ENCODE measurements at regions of chr2 and their contacts with region 1.

Region 1: DNA sequence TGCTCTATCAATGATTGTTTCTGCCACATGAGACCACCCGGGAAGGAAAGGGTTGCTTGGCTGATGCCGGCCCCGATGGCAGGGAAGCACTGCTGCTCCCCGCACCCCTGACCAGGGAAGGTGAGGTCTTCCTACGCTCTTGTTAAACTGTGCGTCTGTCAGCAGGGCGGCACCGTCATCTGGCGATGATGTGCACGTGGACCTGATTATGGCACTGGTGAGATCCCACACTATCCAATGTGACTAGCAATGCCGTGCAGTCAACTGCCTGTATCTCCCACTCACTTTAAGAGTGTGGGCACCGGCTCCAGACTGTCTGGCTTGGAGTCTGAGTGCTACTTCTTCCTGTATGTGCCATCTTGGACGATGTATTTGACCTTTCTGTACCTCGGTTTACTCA is 209.2 kb downstream of the MYT1L start:
- DNase-seq: no peak
- ATAC-seq: no peak
- H3K4me3 ChIP-seq: no peak overlapping the region
- H3K27ac ChIP-seq: no peak overlapping the region
- H3K4me1 ChIP-seq: no peaks in the 10 kb centered on the region
- H3K27me3 ChIP-seq: peaks cover 0 to 6% of the 10 kb centered on the region in 2 experiments; a peak in 3 of 5 replicates
- CTCF ChIP-seq: no peak
- EP300 ChIP-seq: no peak
- POLR2A ChIP-seq: no peak
- RAD21 ChIP-seq: no peak

Region 2: DNA sequence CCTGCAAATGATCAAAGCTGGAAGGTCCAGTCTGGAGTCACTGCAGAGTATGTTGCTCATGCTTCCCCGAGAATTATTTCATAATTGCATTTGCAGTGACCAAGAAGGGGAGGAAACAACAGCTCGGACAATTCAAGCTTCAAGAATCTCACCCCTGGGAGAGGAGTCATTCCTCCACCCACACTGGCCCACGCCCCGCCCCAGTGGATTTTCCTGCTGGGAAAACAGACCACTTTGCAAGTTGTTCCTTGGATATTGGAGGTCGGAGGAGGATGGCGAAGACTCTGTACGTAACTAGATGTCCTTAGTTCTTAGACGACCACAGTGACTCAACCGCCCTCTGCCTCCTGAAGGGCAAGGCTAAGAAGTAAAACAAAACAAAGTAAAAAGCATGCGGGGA is 549.2 kb before region 1 on chr2:
- CTCF ChIA-PET with region 1: no interaction called
- POLR2A ChIA-PET with region 1: no interaction called
- in situ Hi-C with region 1: no loop called
- intact Hi-C with region 1: no loop called
- DNase-seq: no peak
- ATAC-seq: no peak
- H3K4me3 ChIP-seq: no peak overlapping the region
- H3K27ac ChIP-seq: no peak overlapping the region
- H3K4me1 ChIP-seq: no peaks in the 10 kb centered on the region
- H3K27me3 ChIP-seq: peaks cover 4 to 40% of the 10 kb centered on the region in 2 experiments; a peak in 4 of 5 replicates
- CTCF ChIP-seq: no peak
- EP300 ChIP-seq: no peak
- POLR2A ChIP-seq: no peak
- RAD21 ChIP-seq: no peak

Region 3: DNA sequence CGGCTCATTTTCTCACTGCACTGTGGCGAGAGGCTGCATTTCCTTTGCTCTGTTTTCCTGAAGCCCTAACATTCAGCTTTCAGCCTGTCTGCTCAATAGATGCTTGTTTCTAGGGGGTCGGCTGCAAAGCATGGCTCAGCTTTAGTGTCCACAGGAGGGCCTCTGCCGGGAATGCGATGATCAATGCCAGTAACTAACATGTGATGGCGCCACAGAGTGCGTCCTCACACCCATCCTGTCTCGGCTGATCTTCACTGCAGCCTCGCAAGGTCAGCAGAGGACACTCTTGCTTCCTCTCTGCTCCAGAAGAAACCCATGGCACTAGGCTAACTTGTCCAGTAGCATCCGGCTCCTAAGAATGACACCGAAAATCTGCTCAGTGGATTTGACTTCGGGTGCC is 221.2 kb before region 1 on chr2:
- CTCF ChIA-PET with region 1: no interaction called
- POLR2A ChIA-PET with region 1: no interaction called
- in situ Hi-C with region 1: no loop called
- intact Hi-C with region 1: no loop called
- DNase-seq: no peak
- ATAC-seq: no peak; the same call in 2 of the 3 replicates
- H3K4me3 ChIP-seq: no peak overlapping the region
- H3K27ac ChIP-seq: no peak overlapping the region
- H3K4me1 ChIP-seq: no peaks in the 10 kb centered on the region
- H3K27me3 ChIP-seq: peaks cover 0 to 33% of the 10 kb centered on the region in 2 experiments; a peak in 2 of 5 replicates
- CTCF ChIP-seq: no peak
- EP300 ChIP-seq: no peak
- POLR2A ChIP-seq: no peak
- RAD21 ChIP-seq: no peak

Region 4: GRCh38 chr2:2083113-2083758 is 38.7 kb before region 1 on chr2:
- CTCF ChIA-PET with region 1: no interaction called
- POLR2A ChIA-PET with region 1: no interaction called
- in situ Hi-C with region 1: no loop called
- intact Hi-C with region 1: no loop called
- DNase-seq: no peak
- ATAC-seq: no peak
- H3K4me3 ChIP-seq: no peak overlapping the region
- H3K27ac ChIP-seq: no peak overlapping the region
- H3K4me1 ChIP-seq: no peaks in the 10 kb centered on the region
- H3K27me3 ChIP-seq: peaks cover 0 to 8% of the 10 kb centered on the region in 2 experiments; a peak in 1 of 5 replicates
- CTCF ChIP-seq: no peak
- EP300 ChIP-seq: no peak
- POLR2A ChIP-seq: no peak
- RAD21 ChIP-seq: no peak

Region 5: GRCh38 chr2:3034856-3035255 is 913.0 kb after region 1 on chr2:
- CTCF ChIA-PET with region 1: no interaction called
- POLR2A ChIA-PET with region 1: no interaction called
- in situ Hi-C with region 1: no loop called
- intact Hi-C with region 1: loop called (anchors 5 kb)
- DNase-seq: no peak
- ATAC-seq: peak; percentile 68
- H3K4me3 ChIP-seq: no peak overlapping the region
- H3K27ac ChIP-seq: no peak overlapping the region
- H3K4me1 ChIP-seq: no peaks in the 10 kb centered on the region
- H3K27me3 ChIP-seq: peaks cover 6 to 53% of the 10 kb centered on the region in 2 experiments; a peak in 4 of 5 replicates
- CTCF ChIP-seq: no peak
- EP300 ChIP-seq: no peak
- POLR2A ChIP-seq: no peak
- RAD21 ChIP-seq: no peak